PC-3 (cell line): ENCODE measurements at regions of chr2 and their contacts with region 1.

Region 1: DNA sequence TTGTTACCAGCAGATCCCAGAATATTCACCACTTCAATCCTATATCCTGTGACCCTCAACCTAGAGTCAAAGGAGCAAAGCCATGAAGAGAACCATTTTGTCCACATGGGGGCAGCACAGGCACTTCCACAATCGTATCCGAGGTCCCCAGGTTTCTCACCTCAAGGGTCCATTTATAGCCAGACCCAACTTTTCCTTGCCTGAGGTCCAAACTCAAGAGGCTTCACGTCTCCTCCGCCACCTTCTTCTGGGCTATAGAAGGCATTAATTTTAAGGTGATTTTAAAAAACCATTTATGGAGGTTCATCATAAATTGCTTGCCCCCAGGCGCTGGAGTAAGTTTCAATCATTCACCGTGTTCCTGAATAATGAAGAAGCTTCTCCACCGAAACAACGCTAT is 111.6 kb upstream of the NABP1 start:
- DNase-seq: peak; percentile 92
- ATAC-seq: peak; percentile 73
- H3K4me3 ChIP-seq: no peak overlapping the region
- H3K27ac ChIP-seq: no peak overlapping the region
- H3K4me1 ChIP-seq: peaks cover 31% of the 10 kb centered on the region
- H3K27me3 ChIP-seq: no peaks in the 10 kb centered on the region
- CTCF ChIP-seq: peak; percentile 96

Region 2: DNA sequence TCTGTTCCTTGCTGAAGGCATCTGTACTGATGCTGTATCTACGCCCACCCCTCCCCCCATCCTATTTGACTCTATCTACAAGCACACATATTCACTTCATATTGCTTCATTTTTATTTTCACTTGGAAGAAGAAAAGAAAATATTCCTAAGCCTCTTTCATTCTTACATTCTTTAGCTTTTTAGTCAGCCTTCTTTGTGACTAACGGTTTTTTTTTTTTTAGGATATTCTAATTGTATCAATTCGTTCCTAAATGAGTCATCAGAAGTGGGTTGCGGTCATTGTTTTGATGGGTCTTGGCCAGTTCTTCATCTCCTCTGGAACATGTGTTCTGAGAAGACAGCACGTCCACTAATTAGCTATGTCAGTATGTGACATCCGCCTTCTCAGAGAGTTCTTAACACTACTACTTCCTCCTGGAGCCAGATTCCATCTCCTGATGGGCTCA is 232.4 kb before region 1 on chr2:
- CTCF ChIA-PET with region 1: no interaction called
- POLR2A ChIA-PET with region 1: no interaction called
- intact Hi-C with region 1: no loop called
- DNase-seq: no peak
- ATAC-seq: no peak
- H3K4me3 ChIP-seq: no peak overlapping the region
- H3K27ac ChIP-seq: no peak overlapping the region
- H3K4me1 ChIP-seq: no peaks in the 10 kb centered on the region
- H3K27me3 ChIP-seq: no peaks in the 10 kb centered on the region
- CTCF ChIP-seq: no peak

Region 3: GRCh38 chr2:191555092-191555742 is 11.1 kb before region 1 on chr2:
- CTCF ChIA-PET with region 1: interaction called, 3 read pairs
- POLR2A ChIA-PET with region 1: interaction called, 11 read pairs
- intact Hi-C with region 1: no loop called
- DNase-seq: peak; percentile 94
- ATAC-seq: peak; percentile 97
- H3K4me3 ChIP-seq: no peak overlapping the region
- H3K27ac ChIP-seq: no peak overlapping the region
- H3K4me1 ChIP-seq: no peaks in the 10 kb centered on the region
- H3K27me3 ChIP-seq: no peaks in the 10 kb centered on the region
- CTCF ChIP-seq: peak; percentile 86

Region 4: GRCh38 chr2:191637182-191638078 is 71.1 kb after region 1 on chr2:
- CTCF ChIA-PET with region 1: interaction called, 4 read pairs
- POLR2A ChIA-PET with region 1: interaction called, 4 read pairs
- intact Hi-C with region 1: loop called (anchors 1 kb)
- DNase-seq: peak; percentile 95
- ATAC-seq: peak; percentile 80
- H3K4me3 ChIP-seq: peak overlapping the region; percentile 60
- H3K27ac ChIP-seq: peak overlapping the region; percentile 99
- H3K4me1 ChIP-seq: peaks cover 64% of the 10 kb centered on the region
- H3K27me3 ChIP-seq: no peaks in the 10 kb centered on the region
- CTCF ChIP-seq: no peak

Region 5: DNA sequence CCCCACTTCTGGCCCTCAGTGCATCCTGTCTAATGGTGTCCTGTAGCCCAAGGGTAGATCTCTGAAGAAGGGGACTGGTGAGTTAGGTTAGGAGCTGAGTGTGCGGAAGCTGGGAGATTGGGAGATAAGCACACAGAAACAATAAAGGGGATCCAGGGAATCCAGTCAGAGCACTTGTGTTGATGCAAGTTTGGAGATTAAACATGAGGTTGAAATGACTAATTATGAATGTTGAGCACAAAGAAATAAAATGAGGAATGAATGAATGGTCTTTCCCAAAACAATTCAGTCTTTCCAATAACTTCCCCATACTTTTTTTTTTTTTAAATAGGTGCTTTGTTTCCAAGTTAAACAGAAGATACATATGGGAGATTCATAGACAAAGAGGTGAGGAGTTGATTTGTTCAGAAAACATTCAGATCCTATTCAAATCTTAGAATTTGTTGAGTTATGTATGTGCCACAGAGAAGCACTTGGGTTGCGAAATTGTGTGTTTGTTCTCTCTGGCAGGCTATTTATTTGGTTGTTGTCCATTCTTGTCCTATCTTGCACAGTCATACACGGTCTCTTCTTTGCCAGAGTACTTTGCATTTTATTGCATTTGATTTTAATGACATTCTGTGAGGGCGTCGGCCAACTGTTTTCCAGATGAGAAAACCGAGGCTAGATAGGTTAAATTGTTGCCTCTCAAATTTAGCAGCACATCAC is 80.0 kb after region 1 on chr2:
- CTCF ChIA-PET with region 1: no interaction called
- POLR2A ChIA-PET with region 1: interaction called, 3 read pairs
- intact Hi-C with region 1: loop called (anchors 1 kb)
- DNase-seq: peak; percentile 96
- ATAC-seq: peak; percentile 86
- H3K4me3 ChIP-seq: peak overlapping the region; percentile 31; the same call in 1 of the 2 replicates
- H3K27ac ChIP-seq: peak overlapping the region; percentile 97
- H3K4me1 ChIP-seq: peaks cover 42% of the 10 kb centered on the region
- H3K27me3 ChIP-seq: no peaks in the 10 kb centered on the region
- CTCF ChIP-seq: no peak

Region 6: DNA sequence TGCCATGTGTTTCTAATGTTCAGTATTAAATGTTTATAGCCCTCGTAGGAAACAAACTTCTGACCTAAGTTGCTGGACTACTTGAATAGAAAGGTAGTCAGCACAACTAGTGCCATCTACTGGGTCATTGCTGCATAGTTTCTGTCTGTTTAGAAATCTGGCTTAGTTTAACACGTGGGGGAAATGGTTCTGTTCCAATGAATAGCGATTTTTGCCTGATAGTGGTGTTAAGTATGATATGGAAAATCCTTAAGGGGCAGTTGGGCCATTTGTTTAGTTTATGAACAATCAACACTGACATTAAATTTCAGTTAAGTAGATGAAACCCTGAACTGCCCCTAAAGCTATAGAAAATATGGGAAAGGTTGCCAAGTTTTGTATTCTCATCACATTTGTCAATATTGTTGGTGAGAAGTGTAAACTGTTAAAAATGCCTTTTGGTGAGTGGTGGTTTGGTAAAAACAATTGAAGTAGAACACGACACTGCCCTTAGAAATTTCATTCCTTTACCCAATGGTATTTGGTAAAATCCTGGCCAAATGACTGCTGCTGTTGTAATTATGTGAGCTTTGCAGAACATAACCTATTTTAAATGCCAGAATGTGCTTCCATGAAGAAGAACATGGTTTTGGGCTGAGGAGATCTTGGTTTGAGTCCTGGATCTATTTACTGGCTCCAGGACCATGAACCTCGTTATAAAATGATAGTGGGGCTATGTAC is 124.8 kb after region 1 on chr2:
- CTCF ChIA-PET with region 1: interaction called, 4 read pairs
- POLR2A ChIA-PET with region 1: no interaction called
- intact Hi-C with region 1: loop called (anchors 1 kb)
- DNase-seq: peak; percentile 92
- ATAC-seq: peak; percentile 45
- H3K4me3 ChIP-seq: no peak overlapping the region
- H3K27ac ChIP-seq: peak overlapping the region; percentile 26
- H3K4me1 ChIP-seq: peaks cover 49% of the 10 kb centered on the region
- H3K27me3 ChIP-seq: no peaks in the 10 kb centered on the region
- CTCF ChIP-seq: peak; percentile 93

Region 7: DNA sequence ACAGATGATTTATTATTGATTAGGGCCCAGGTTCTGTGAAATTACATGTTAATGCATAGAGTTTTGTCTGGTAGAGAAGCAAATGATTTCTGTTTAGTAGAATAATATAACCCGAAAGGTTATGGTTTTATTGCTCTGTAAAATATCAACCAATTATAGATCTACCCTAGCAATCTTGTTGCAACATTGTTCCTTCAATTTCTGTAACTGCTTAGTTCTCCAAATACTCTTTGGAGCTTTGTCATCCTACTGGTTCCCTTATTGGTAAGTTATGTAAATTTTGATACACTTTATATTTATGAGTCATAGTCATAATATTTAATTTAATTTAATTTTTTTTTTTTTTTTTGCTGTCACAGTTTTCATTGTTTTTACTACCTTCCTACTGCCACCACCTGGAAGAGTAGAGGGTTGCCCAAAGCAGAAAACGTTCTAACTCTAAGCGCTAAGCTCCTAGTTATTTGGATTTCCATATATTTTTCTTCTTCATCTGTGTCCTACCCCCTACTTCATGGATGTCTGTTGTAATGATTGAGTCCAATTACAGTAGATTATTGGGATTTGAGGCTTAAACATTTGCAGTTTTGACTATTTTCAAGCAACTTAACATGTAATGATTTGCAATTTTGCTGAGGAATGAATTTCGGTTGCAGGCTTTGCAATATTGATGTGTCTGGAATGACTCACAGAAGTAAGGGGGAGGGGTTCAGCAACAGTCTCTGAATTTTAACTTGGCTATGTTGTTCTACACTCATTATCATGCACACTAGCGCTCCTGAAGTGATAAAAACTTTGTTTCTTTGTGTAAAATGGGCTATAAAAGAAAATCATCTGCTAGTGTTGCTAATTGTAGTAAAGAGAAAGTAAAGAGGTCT is 162.6 kb after region 1 on chr2:
- CTCF ChIA-PET with region 1: interaction called, 3 read pairs
- POLR2A ChIA-PET with region 1: no interaction called
- intact Hi-C with region 1: loop called (anchors 1 kb)
- DNase-seq: peak; percentile 44
- ATAC-seq: peak; percentile 78
- H3K4me3 ChIP-seq: no peak overlapping the region
- H3K27ac ChIP-seq: no peak overlapping the region
- H3K4me1 ChIP-seq: peaks cover 8% of the 10 kb centered on the region
- H3K27me3 ChIP-seq: no peaks in the 10 kb centered on the region
- CTCF ChIP-seq: peak; percentile 32

Region 8: DNA sequence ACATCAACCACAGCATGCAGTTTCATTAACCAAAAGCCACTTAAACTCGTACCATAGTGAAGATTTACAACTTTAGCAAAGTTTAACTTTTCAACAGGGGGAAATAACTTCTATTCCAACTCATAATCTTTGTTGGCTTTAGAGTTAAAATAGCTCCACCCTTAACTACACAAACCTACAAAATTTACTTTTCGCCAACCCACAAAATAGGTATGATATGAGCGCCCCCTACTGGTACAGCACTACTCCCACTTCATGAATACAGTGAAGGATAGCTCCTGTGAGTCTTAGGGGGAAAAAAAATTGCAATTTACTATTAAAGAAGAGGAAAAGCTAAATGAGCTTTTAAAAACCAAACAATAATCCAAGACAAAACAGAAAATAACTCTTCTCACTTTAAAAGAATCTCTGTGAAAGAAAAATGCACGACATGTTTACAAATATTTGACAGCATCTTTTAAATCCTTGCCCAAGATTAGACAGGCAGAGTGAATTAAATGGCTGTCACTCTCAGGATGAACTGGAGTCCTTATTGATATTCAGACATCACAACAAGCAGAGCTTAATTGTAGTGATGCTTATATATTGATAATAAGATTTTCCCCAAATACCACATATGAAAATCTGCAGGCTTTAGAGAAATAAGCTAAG is 596.2 kb after region 1 on chr2:
- CTCF ChIA-PET with region 1: interaction called, 12 read pairs
- POLR2A ChIA-PET with region 1: no interaction called
- intact Hi-C with region 1: no loop called
- DNase-seq: peak; percentile 87
- ATAC-seq: peak; percentile 92
- H3K4me3 ChIP-seq: no peak overlapping the region
- H3K27ac ChIP-seq: no peak overlapping the region
- H3K4me1 ChIP-seq: peaks cover 5% of the 10 kb centered on the region; the same call in 1 of the 2 replicates
- H3K27me3 ChIP-seq: 0 out of 2 replicates have a peak, but pooled peaks cover 1% of the 10 kb centered on the region
- CTCF ChIP-seq: peak; percentile 97